ENCODE measurements at regions of chrX and their contacts with region 1.

Region 1: DNA sequence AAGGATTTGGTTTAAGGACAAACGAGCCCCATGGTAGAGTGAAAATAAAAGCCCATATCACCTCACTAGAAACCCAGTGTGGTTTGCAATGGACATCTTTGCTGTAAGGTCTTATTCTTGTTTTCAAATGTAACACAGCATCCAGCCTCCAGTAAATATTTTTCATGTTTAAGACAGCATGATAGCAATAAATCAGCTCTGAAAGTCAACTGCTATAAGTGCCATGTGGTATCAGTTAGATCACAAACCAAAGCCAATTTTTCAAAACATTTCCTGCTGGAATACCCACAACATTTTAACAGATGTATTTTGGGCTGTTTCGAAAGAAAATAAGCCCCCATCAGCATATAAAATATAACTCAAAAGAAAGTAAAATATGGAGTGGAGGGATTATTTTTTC is 24.0 kb upstream of the SCML1 start:
- DNase-seq: no peak
- ATAC-seq: no peak
- H3K4me3 ChIP-seq: no peak overlapping the region
- H3K27ac ChIP-seq: no peak overlapping the region
- H3K4me1 ChIP-seq: no peaks in the 10 kb centered on the region
- H3K27me3 ChIP-seq: no peaks in the 10 kb centered on the region
- CTCF ChIP-seq: no peak

Region 2: GRCh38 chrX:17154001-17154400 is 559.3 kb before region 1 on chrX:
- CTCF ChIA-PET with region 1: no interaction called
- POLR2A ChIA-PET with region 1: interaction called, 19 read pairs
- intact Hi-C with region 1: no loop called
- DNase-seq: peak; percentile 55
- ATAC-seq: no peak
- H3K4me3 ChIP-seq: no peak overlapping the region
- H3K27ac ChIP-seq: no peak overlapping the region
- H3K4me1 ChIP-seq: peaks cover 3% of the 10 kb centered on the region; the same call in 1 of the 2 replicates
- H3K27me3 ChIP-seq: no peaks in the 10 kb centered on the region
- CTCF ChIP-seq: no peak

Measured in PC-3 (cell line).